CD4-positive, alpha-beta memory T cell (primary cell): ENCODE measurements at regions of chr5 and their contacts with region 1.

Region 1: GRCh38 chr5:172179361-172179989 is 8.5 kb downstream of the STK10 start:
- DNase-seq: peak in 4 of 5 donors; percentile 37 to 80 (median 44)
- H3K4me3 ChIP-seq: peak overlapping the region; percentile 44 to 55
- H3K4me3 Mint-ChIP-seq: peak overlapping the region; percentile 85 to 99 (median 94)
- H3K27ac ChIP-seq: peak overlapping the region; percentile 96
- H3K27ac Mint-ChIP-seq: peak overlapping the region; percentile 97 to 100 (median 99)
- H3K4me1 ChIP-seq: peaks cover 90% of the 10 kb centered on the region
- H3K4me1 Mint-ChIP-seq: peaks cover 51 to 97% (median 75%) of the 10 kb centered on the region in 4 donors
- H3K27me3 ChIP-seq: no peaks in the 10 kb centered on the region
- H3K27me3 Mint-ChIP-seq: no peaks in the 10 kb centered on the region

Region 2: GRCh38 chr5:172006321-172007174 is 172.9 kb before region 1 on chr5 and contains the start of gene FBXW11:
- CTCF ChIA-PET with region 1: interaction called, 5 read pairs
- POLR2A ChIA-PET with region 1: interaction called, 55 read pairs
- intact Hi-C with region 1: no loop called
- DNase-seq: peak; percentile 93 to 98 (median 94)
- H3K4me3 ChIP-seq: peak within 1 kb of the TSS; percentile 93 to 97
- H3K4me3 Mint-ChIP-seq: peak within 1 kb of the TSS; percentile 91 to 99 (median 97)
- H3K27ac ChIP-seq: peak within 1 kb of the TSS; percentile 93
- H3K27ac Mint-ChIP-seq: peak within 1 kb of the TSS; percentile 93 to 99 (median 98)
- H3K4me1 ChIP-seq: peaks cover 53% of the 10 kb centered on the region
- H3K4me1 Mint-ChIP-seq: peaks cover 32 to 56% (median 46%) of the 10 kb centered on the region in 4 donors
- H3K27me3 ChIP-seq: no peaks in the 10 kb centered on the region
- H3K27me3 Mint-ChIP-seq: no peaks in the 10 kb centered on the region
- total RNA-seq, gene FBXW11: 41.7 to 43.4 TPM

Region 3: GRCh38 chr5:172106511-172107356 is 72.7 kb before region 1 on chr5:
- CTCF ChIA-PET with region 1: interaction called, 248 read pairs
- POLR2A ChIA-PET with region 1: interaction called, 597 read pairs
- intact Hi-C with region 1: no loop called
- DNase-seq: peak; percentile 49 to 67 (median 56)
- H3K4me3 ChIP-seq: no peak overlapping the region
- H3K4me3 Mint-ChIP-seq: peak overlapping the region in 4 of 8 donors; percentile 45 to 65 (median 52)
- H3K27ac ChIP-seq: peak overlapping the region; percentile 36
- H3K27ac Mint-ChIP-seq: peak overlapping the region; percentile 77 to 93 (median 87)
- H3K4me1 ChIP-seq: peaks cover 43% of the 10 kb centered on the region
- H3K4me1 Mint-ChIP-seq: peaks cover 21 to 65% (median 37%) of the 10 kb centered on the region in 4 donors
- H3K27me3 ChIP-seq: no peaks in the 10 kb centered on the region
- H3K27me3 Mint-ChIP-seq: no peaks in the 10 kb centered on the region

Region 4: DNA sequence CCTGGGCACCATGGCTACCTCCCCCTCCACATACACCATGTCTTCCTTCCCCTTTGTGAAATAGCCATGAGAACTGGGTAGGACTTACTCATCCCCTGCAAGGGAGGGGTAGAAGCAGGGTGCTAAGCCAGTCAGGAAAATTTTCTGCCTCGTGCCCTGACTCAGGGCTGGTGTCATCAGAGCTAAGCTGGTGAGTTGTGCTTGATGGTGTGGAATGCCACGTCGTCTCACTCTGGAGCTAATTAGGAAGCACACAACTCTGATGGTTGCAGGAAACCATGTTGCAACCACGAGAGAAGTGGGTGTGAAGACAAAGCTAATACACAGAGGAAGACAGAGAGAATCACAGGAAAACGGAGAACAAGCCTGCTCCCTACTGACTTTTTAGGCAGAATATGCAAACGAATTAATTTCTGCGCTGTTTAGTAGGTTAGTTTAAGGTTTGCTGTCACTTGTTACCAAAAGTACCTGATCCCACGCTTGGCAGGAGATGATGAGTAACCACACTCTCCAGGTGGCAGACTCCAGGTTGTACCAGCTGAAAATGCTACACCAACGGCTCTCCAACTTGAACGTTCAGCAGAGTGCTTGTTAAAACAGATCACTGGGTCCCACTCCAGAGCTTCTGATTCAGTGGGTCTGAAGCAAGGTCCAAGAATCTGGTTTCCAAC is 46.0 kb before region 1 on chr5:
- CTCF ChIA-PET with region 1: interaction called, 8 read pairs
- POLR2A ChIA-PET with region 1: interaction called, 29 read pairs
- intact Hi-C with region 1: no loop called
- DNase-seq: peak in 4 of 5 donors; percentile 12 to 66 (median 18)
- H3K4me3 ChIP-seq: peak overlapping the region; percentile 2 to 10
- H3K4me3 Mint-ChIP-seq: peak overlapping the region; percentile 33 to 73 (median 58)
- H3K27ac ChIP-seq: peak overlapping the region; percentile 14
- H3K27ac Mint-ChIP-seq: peak overlapping the region; percentile 50 to 94 (median 86)
- H3K4me1 ChIP-seq: peaks cover 64% of the 10 kb centered on the region
- H3K4me1 Mint-ChIP-seq: peaks cover 47 to 76% (median 61%) of the 10 kb centered on the region in 4 donors
- H3K27me3 ChIP-seq: no peaks in the 10 kb centered on the region
- H3K27me3 Mint-ChIP-seq: no peaks in the 10 kb centered on the region

Region 5: DNA sequence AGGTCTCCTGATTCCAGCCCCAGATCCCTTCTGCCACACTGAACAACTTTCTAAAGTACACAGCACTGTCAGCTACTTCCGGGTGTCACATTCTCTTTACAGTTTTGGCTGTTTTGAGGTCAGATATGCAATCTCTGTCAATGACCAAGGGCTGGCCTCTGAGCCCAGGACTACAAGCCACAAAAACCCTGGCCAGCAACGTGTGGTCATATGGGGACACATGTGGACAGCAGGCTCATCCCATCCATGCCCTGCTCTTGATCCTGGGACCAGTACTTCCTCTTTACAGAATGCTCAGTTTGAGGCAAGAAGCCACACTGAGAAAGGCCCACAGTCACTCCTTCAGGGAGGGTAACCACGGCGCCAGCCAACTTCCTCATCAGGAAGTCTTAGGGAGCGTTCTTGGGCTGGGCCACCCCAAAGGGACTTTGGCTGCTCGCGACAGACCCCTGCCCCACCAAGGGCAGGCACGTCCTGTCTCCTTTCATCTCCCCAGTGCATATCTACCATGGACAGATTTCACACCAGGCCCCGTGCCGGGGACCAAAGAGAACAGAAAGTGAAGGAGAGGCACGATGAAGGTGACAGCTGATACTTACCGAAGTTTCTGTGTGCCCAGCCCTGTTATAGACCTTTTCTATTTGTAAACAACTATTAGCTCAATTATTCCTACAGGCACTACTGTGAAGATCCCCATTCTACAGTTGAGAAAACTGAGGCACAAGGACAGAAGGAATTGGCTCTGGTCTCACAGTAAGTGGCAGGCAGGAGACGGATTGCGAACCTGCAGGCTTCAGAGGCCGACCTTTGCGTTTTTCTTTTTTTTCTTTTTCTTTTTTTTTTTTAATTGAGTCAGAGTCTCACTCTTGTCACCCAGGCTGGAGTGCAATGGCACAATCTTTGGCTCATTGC is 28.7 kb before region 1 on chr5:
- CTCF ChIA-PET with region 1: interaction called, 429 read pairs
- POLR2A ChIA-PET with region 1: interaction called, 68 read pairs
- intact Hi-C with region 1: loop called (anchors 1 kb)
- DNase-seq: peak in 4 of 5 donors; percentile 14 to 37 (median 26)
- H3K4me3 ChIP-seq: peak overlapping the region in 1 of 2 donors; percentile 48
- H3K4me3 Mint-ChIP-seq: peak overlapping the region; percentile 36 to 79 (median 73)
- H3K27ac ChIP-seq: peak overlapping the region; percentile 55
- H3K27ac Mint-ChIP-seq: peak overlapping the region; percentile 89 to 97 (median 94)
- H3K4me1 ChIP-seq: peaks cover 88% of the 10 kb centered on the region
- H3K4me1 Mint-ChIP-seq: peaks cover 54 to 91% (median 74%) of the 10 kb centered on the region in 4 donors
- H3K27me3 ChIP-seq: no peaks in the 10 kb centered on the region
- H3K27me3 Mint-ChIP-seq: no peaks in the 10 kb centered on the region

Region 6: DNA sequence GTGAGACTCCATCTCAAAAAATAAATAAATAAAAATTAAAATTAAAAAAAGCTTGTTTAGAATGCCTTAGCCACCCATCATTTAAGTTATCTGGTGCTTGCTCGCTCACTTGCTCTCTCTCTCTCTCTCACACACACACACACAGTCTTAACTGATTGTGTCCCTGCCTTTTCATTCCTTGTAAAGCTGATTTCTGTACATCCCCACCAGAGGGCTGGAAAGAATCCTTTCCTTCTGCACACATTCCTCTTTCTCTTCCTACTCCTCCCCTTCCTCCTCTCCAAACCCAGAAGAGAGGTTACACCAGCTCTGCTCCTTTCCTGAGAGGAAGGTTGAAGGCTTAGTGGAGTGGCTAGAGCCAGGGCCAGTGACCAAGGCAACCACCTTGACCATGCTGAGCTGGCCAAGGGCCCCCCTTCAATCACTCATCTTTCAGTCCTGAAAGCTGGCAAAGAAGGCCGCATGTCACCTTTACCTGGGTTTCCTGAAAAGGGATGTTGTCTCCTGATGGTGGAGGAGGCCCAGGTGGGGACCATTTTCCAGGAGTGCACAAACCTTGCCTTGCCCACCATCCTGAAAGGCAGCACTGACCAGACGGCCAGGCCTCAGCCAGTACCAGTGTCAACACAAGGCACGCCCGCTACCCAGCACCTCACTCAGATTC is 17.0 kb before region 1 on chr5:
- CTCF ChIA-PET with region 1: interaction called, 429 read pairs
- POLR2A ChIA-PET with region 1: interaction called, 89 read pairs
- intact Hi-C with region 1: no loop called
- DNase-seq: no peak
- H3K4me3 ChIP-seq: no peak overlapping the region
- H3K4me3 Mint-ChIP-seq: peak overlapping the region in 5 of 8 donors; percentile 37 to 77 (median 56)
- H3K27ac ChIP-seq: no peak overlapping the region
- H3K27ac Mint-ChIP-seq: peak overlapping the region; percentile 9 to 94 (median 66)
- H3K4me1 ChIP-seq: peaks cover 87% of the 10 kb centered on the region
- H3K4me1 Mint-ChIP-seq: peaks cover 45 to 96% (median 71%) of the 10 kb centered on the region in 4 donors
- H3K27me3 ChIP-seq: no peaks in the 10 kb centered on the region
- H3K27me3 Mint-ChIP-seq: no peaks in the 10 kb centered on the region

Region 7: DNA sequence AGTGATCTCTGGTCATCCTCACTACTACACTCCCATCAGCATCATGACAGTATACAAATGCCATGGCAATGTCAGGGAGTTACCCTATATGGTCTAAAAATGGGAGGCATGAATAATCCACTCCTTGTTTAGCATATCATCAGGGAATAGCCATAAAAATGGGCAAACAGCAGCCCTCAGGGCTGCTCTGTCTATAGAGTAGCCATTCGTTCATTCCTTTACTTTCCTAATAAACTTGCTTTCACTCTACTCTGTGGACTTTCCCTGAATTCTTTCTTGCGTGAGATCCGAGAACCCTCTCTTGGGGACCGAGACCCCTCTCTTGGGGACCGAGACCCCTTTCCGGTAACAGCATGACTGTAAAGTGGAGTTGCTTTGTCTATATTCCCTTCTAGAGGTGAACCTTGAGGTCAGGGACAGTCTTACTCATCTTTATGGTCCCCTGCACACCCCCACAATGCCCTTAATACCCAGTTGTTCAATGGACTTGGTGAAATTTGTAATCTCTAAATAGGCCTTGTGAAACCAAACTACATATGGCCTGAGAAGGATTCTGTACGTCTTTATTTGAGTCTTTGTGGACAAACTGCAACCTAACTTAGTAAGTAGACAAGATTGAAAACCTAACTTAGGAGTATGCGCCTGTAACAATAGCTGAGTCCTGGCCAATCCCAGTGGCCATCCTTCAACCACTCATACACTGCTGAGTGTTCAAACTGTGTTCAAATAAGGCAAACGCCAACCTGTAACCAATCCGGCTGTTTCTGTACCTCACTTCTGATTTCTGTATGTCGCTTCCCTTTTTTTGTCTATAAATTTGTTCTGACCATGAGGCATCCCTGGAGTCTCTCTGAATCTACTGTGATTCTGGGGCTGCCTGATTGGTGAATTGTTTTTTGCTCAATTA is 136.4 kb after region 1 on chr5:
- CTCF ChIA-PET with region 1: no interaction called
- POLR2A ChIA-PET with region 1: no interaction called
- intact Hi-C with region 1: no loop called
- DNase-seq: no peak
- H3K4me3 ChIP-seq: no peak overlapping the region
- H3K4me3 Mint-ChIP-seq: no peak overlapping the region
- H3K27ac ChIP-seq: no peak overlapping the region
- H3K27ac Mint-ChIP-seq: no peak overlapping the region
- H3K4me1 ChIP-seq: no peaks in the 10 kb centered on the region
- H3K4me1 Mint-ChIP-seq: peaks cover 0 to 1% (median 0%) of the 10 kb centered on the region in 4 donors
- H3K27me3 ChIP-seq: no peaks in the 10 kb centered on the region
- H3K27me3 Mint-ChIP-seq: peaks cover 1 to 3% of the 10 kb centered on the region in 2 donors

Region 8: DNA sequence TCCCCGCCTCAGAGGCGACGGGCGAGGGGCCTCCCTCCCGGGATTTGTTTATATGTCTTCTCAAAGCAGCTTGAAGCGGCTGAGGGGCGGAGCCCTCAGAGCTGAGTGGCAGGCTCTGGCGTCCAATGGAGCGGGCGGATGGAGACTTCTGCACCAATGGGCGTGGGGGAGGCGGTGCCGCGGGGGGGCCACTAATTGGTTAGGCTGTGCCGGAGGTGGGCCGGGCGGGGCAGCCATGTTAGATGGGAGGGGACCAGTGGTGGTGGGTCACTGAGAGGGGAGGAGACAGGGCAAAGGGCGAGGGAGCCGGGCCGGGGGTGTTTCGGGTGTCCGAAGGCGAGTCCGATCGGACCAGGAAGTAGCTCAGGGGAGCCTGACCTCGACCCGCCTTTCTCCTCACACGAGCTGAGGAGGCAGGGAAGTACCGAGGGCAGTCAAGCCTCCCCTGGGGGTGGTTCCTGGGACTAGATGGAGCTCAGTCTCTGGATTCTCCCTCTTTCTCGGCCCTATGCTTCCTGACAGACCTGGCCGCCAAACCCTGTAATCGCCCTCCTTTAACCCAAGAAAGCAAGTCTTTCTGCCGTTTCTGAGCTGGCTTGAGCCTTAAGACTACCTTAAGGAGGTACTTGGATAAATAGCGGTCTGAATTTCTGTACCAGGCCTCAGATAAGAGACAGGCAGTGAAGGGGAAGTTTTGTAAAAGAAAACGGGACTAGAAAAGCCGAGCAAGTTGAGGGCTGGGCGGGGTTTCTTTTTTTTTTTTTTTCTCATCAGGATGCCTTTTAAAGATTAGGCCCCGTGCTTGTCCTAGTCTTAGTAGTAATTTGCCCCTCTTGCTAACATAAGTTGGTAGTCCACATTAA is 877.8 kb after region 1 on chr5:
- CTCF ChIA-PET with region 1: no interaction called
- POLR2A ChIA-PET with region 1: interaction called, 3 read pairs
- intact Hi-C with region 1: loop called (anchors 2 kb)
- DNase-seq: peak; percentile 97 to 99 (median 98)
- H3K4me3 ChIP-seq: peak overlapping the region; percentile 68 to 71
- H3K4me3 Mint-ChIP-seq: peak overlapping the region; percentile 92 to 98 (median 95)
- H3K27ac ChIP-seq: peak overlapping the region; percentile 95
- H3K27ac Mint-ChIP-seq: peak overlapping the region; percentile 90 to 96 (median 96)
- H3K4me1 ChIP-seq: peaks cover 50% of the 10 kb centered on the region
- H3K4me1 Mint-ChIP-seq: peaks cover 26 to 68% (median 47%) of the 10 kb centered on the region in 4 donors
- H3K27me3 ChIP-seq: no peaks in the 10 kb centered on the region
- H3K27me3 Mint-ChIP-seq: no peaks in the 10 kb centered on the region